IMR-90 (cell line): ENCODE measurements at regions of chr5 and their contacts with region 1.

Region 1: DNA sequence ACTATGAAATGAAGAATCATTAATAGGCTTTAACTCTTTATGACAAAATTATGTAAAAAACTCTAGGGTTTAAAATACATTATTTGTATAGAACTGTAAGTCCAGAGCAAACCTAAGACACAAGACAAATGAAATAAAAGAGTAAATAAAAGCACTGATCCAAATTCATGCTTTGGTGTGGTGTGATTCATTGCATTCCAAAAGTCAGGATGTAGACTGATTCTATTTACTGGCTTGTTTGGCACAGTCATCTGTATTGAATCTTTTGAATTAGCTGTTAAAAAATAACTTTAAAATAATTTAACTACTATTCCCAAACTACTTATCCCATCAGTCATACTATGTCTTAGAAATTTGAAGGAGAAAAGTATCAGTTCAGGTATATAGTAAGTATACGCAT is 31.1 kb downstream of the IL4 start:
- DNase-seq: peak; percentile 42
- ATAC-seq: peak; percentile 84
- H3K4me3 ChIP-seq: no peak overlapping the region
- H3K27ac ChIP-seq: no peak overlapping the region
- H3K4me1 ChIP-seq: no peaks in the 10 kb centered on the region
- H3K27me3 ChIP-seq: no peaks in the 10 kb centered on the region
- CTCF ChIP-seq: no peak
- POLR2A ChIP-seq: no peak
- RAD21 ChIP-seq: no peak

Region 2: GRCh38 chr5:132526290-132526973 is 178.4 kb before region 1 on chr5:
- CTCF ChIA-PET with region 1: interaction called, 3 read pairs
- POLR2A ChIA-PET with region 1: no interaction called
- dilution Hi-C with region 1: no loop called
- in situ Hi-C with region 1: loop called (anchors 10 kb)
- intact Hi-C with region 1: loop called (anchors 10 kb)
- DNase-seq: peak; percentile 50
- ATAC-seq: peak; percentile 95
- H3K4me3 ChIP-seq: no peak overlapping the region
- H3K27ac ChIP-seq: no peak overlapping the region
- H3K4me1 ChIP-seq: peaks cover 1% of the 10 kb centered on the region; the same call in 1 of the 2 replicates
- H3K27me3 ChIP-seq: peaks cover 13% of the 10 kb centered on the region
- CTCF ChIP-seq: peak; percentile 74
- POLR2A ChIP-seq: no peak
- RAD21 ChIP-seq: peak; percentile 72

Region 3: GRCh38 chr5:132612846-132613245 is 92.0 kb before region 1 on chr5:
- CTCF ChIA-PET with region 1: no interaction called
- POLR2A ChIA-PET with region 1: no interaction called
- dilution Hi-C with region 1: no loop called
- in situ Hi-C with region 1: no loop called
- intact Hi-C with region 1: loop called (anchors 5 kb)
- DNase-seq: no peak
- ATAC-seq: no peak
- H3K4me3 ChIP-seq: no peak overlapping the region
- H3K27ac ChIP-seq: no peak overlapping the region
- H3K4me1 ChIP-seq: no peaks in the 10 kb centered on the region
- H3K27me3 ChIP-seq: no peaks in the 10 kb centered on the region
- CTCF ChIP-seq: no peak
- POLR2A ChIP-seq: no peak
- RAD21 ChIP-seq: no peak

Region 4: GRCh38 chr5:132655821-132656773 is 48.8 kb before region 1 on chr5:
- CTCF ChIA-PET with region 1: no interaction called
- POLR2A ChIA-PET with region 1: no interaction called
- dilution Hi-C with region 1: no loop called
- in situ Hi-C with region 1: no loop called
- intact Hi-C with region 1: no loop called
- DNase-seq: no peak
- ATAC-seq: peak; percentile 78
- H3K4me3 ChIP-seq: peak overlapping the region; percentile 38
- H3K27ac ChIP-seq: no peak overlapping the region
- H3K4me1 ChIP-seq: no peaks in the 10 kb centered on the region
- H3K27me3 ChIP-seq: peaks cover 11% of the 10 kb centered on the region; the same call in 1 of the 2 replicates
- CTCF ChIP-seq: peak; percentile 30; the same call in 1 of the 2 replicates
- POLR2A ChIP-seq: no peak
- RAD21 ChIP-seq: peak; percentile 40; the same call in 1 of the 2 replicates

Region 5: GRCh38 chr5:132905867-132906295 is 201.0 kb after region 1 on chr5:
- CTCF ChIA-PET with region 1: no interaction called
- POLR2A ChIA-PET with region 1: no interaction called
- dilution Hi-C with region 1: no loop called
- in situ Hi-C with region 1: no loop called
- intact Hi-C with region 1: no loop called
- DNase-seq: peak; percentile 50
- ATAC-seq: peak; percentile 68
- H3K4me3 ChIP-seq: no peak overlapping the region
- H3K27ac ChIP-seq: no peak overlapping the region
- H3K4me1 ChIP-seq: no peaks in the 10 kb centered on the region
- H3K27me3 ChIP-seq: no peaks in the 10 kb centered on the region
- CTCF ChIP-seq: no peak
- POLR2A ChIP-seq: no peak
- RAD21 ChIP-seq: no peak